ENCODE measurements at regions of chr4 and their contacts with region 1.

Region 1: GRCh38 chr4:165879641-165880040 is 6.6 kb downstream of the TLL1 start:
- DNase-seq: no peak

Region 2: GRCh38 chr4:164888096-164888715 is 991.4 kb before region 1 on chr4:
- intact Hi-C with region 1: loop called in 1 of 2 experiments (anchors 10 kb)
- DNase-seq: no peak

Region 3: GRCh38 chr4:165905405-165906027 is 25.9 kb after region 1 on chr4:
- intact Hi-C with region 1: no loop called
- DNase-seq: no peak

Measured in posterior vena cava (tissue), 2 donors.